Activated T-helper 1 cell treated with anti-CD3 and anti-CD28 coated beads, Interleukin-12 subunit alpha, Interleukin-12 subunit beta, Interleukin-2, Interleukin-4 antibody, amounts not matched to agents 30 ng/mL and 10 ng/mL and 1 ng/mL, durations not matched to agents 14 hours and 24 hours and 36 hours (primary cell): ENCODE measurements at regions of chr10 and their contacts with region 1.

Region 1: DNA sequence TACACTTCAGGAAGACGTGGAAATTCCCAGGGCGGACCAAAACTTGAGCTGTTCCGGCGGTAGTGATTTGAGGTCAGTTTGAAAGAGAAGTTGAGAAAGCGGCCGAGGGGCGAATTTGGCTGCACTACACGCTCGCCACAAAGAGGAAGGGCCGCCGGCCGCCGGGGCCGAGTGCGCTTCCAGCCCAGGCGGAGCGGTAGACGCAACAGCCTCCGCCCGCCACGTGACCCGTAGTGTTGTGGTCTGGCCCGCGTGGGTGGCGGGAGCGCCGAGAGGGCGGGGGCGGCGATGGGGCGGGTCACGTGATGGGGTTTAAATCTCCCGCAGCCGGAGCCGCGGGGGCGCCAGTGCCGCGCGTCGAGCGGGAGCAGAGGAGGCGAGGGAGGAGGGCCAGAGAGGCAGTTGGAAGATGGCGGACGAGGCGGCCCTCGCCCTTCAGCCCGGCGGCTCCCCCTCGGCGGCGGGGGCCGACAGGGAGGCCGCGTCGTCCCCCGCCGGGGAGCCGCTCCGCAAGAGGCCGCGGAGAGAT is at the start of gene SIRT1:
- DNase-seq: peak; percentile 91
- H3K4me3 Mint-ChIP-seq: peak within 1 kb of the TSS; percentile 91
- H3K27ac Mint-ChIP-seq: peak within 1 kb of the TSS; percentile 87
- H3K4me1 Mint-ChIP-seq: peaks cover 28% of the 10 kb centered on the region
- H3K27me3 Mint-ChIP-seq: peaks cover 4% of the 10 kb centered on the region
- total RNA-seq, gene SIRT1: 27.4 and 29.3 TPM in 2 replicates

Region 2: GRCh38 chr10:67225226-67225625 is 659.2 kb before region 1 on chr10:
- intact Hi-C with region 1: no loop called
- DNase-seq: no peak
- H3K4me3 Mint-ChIP-seq: no peak overlapping the region
- H3K27ac Mint-ChIP-seq: no peak overlapping the region
- H3K4me1 Mint-ChIP-seq: no peaks in the 10 kb centered on the region
- H3K27me3 Mint-ChIP-seq: no peaks in the 10 kb centered on the region

Region 3: DNA sequence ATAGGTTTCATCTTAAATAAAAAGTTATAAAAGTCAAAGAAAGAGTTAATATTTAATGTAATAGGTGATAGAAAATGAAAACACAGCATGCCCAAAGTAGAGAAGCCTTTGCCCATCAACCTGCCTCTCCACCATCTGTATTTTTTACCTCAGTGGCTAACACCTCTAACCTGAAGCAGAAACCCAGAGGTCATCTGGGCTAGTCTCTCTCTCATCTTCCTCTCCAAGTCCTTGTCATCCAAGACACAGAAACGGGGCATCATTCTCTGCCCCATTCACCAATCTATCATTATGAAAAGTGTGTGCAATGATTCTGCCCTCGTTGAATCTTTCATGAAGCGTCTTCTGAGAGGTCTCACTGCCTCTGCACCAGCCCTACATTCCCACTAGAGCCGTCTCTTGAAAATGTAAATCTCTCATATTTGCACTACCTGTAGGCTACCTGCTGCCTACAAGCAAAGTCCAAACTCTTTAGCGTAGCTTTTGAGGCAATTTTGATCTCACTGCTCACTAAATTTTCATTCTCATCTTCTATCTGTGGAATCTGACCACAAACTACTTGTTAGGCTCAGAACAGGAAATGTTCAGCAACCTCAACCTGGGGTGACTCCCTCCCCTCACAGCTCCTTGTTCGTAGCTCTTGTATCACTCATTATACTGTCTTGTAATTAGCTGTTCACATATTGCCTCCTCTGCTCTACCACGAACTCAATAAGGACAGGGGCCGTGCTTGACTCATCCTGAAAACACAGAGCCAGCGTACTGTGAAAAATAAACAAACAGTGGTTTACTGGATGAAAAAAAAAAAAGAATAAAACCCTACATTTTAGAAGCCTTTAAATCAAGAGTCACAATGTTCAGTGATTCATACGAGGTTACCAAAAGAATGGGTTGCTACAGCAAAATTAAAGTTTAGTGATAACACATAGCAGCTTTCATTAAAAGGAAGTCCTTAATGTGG is 271.5 kb before region 1 on chr10:
- intact Hi-C with region 1: loop called (anchors 1 kb)
- DNase-seq: peak; percentile 66
- H3K4me3 Mint-ChIP-seq: peak overlapping the region; percentile 47
- H3K27ac Mint-ChIP-seq: peak overlapping the region; percentile 49
- H3K4me1 Mint-ChIP-seq: peaks cover 23% of the 10 kb centered on the region
- H3K27me3 Mint-ChIP-seq: peaks cover 9% of the 10 kb centered on the region

Region 4: DNA sequence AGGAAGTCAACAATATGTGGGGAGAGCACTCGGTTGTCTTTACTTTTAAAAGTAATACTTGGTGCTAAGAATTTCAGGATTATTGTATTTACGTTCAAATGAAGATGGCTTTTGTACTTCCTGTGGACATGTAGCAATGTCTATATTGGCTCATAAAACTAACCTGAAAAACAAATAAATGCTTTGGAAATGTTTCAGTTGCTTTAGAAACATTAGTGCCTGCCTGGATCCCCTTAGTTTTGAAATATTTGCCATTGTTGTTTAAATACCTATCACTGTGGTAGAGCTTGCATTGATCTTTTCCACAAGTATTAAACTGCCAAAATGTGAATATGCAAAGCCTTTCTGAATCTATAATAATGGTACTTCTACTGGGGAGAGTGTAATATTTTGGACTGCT is 32.8 kb after region 1 on chr10:
- intact Hi-C with region 1: loop called (anchors 2 kb)
- DNase-seq: no peak
- H3K4me3 Mint-ChIP-seq: no peak overlapping the region
- H3K27ac Mint-ChIP-seq: no peak overlapping the region
- H3K4me1 Mint-ChIP-seq: peaks cover 11% of the 10 kb centered on the region
- H3K27me3 Mint-ChIP-seq: no peaks in the 10 kb centered on the region

Region 5: GRCh38 chr10:68156373-68157185 is 272.2 kb after region 1 on chr10:
- intact Hi-C with region 1: loop called (anchors 10 kb)
- DNase-seq: peak; percentile 26
- H3K4me3 Mint-ChIP-seq: no peak overlapping the region
- H3K27ac Mint-ChIP-seq: no peak overlapping the region
- H3K4me1 Mint-ChIP-seq: no peaks in the 10 kb centered on the region
- H3K27me3 Mint-ChIP-seq: no peaks in the 10 kb centered on the region